Naive thymus-derived CD4-positive, alpha-beta T cell (primary cell): ENCODE measurements at regions of chr12 and their contacts with region 1.

Region 1: DNA sequence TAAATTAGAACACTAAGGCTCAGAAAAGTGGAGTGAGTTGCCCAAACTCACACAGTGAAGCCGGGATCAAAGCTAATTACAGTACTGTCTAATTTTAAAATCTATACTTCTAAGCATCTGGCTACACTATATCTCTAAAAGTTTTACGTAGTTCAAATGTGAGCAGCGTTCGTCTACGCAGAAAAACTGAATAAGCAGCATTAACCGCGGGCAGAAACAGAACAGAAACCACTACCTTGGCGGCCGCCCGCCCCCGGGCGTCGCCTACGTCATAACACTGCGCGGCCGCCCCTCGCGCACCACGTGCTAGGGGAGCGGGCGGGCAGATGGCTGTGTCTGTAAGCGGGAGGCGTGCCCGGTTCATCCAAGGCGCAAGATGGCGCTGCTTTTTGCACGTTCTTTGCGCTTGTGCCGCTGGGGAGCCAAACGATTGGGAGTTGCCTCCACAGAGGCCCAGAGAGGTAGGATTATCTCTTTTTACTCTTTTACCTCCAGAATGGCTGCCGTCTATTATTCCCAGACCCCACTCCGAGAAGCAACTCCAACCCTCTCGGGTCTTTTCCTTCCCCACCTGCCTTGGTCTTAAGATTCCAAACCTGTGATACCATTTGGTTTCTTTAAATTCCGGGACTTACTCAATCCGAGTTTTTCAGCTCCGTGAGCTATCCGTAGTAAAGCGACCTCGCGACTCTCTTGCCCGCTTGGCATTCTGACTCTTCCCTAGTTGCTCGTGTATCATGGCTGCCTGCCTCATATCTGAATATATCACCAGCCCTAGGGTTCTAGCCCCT is at the start of gene SPRYD4:
- DNase-seq: peak; percentile 89 to 97 (median 96)
- ATAC-seq: peak; percentile 99
- H3K4me3 ChIP-seq: peak within 1 kb of the TSS; percentile 99
- H3K4me3 Mint-ChIP-seq: peak within 1 kb of the TSS; percentile 90 to 99 (median 97)
- H3K27ac ChIP-seq: peak within 1 kb of the TSS; percentile 87
- H3K27ac Mint-ChIP-seq: peak within 1 kb of the TSS; percentile 92 to 99 (median 98)
- H3K4me1 ChIP-seq: peaks cover 12 to 20% of the 10 kb centered on the region in 2 donors
- H3K4me1 Mint-ChIP-seq: peaks cover 6 to 51% (median 26%) of the 10 kb centered on the region in 7 donors
- H3K27me3 ChIP-seq: no peaks in the 10 kb centered on the region
- H3K27me3 Mint-ChIP-seq: no peaks in the 10 kb centered on the region
- total RNA-seq, gene SPRYD4: 5.2 to 7.5 (median 7.2) TPM

Region 2: GRCh38 chr12:56206457-56207166 is 261.8 kb before region 1 on chr12:
- CTCF ChIA-PET with region 1: interaction called, 4 read pairs
- POLR2A ChIA-PET with region 1: no interaction called
- intact Hi-C with region 1: loop called (anchors 1 to 5 kb)
- DNase-seq: peak in 5 of 9 donors; percentile 13 to 37 (median 29)
- ATAC-seq: peak; percentile 70
- H3K4me3 ChIP-seq: no peak overlapping the region
- H3K4me3 Mint-ChIP-seq: no peak overlapping the region
- H3K27ac ChIP-seq: no peak overlapping the region
- H3K27ac Mint-ChIP-seq: peak overlapping the region in 6 of 9 donors; percentile 6 to 74 (median 33)
- H3K4me1 ChIP-seq: no peaks in the 10 kb centered on the region
- H3K4me1 Mint-ChIP-seq: peaks cover 0 to 9% (median 6%) of the 10 kb centered on the region in 7 donors
- H3K27me3 ChIP-seq: no peaks in the 10 kb centered on the region
- H3K27me3 Mint-ChIP-seq: no peaks in the 10 kb centered on the region

Region 3: GRCh38 chr12:56315622-56316473 is 152.6 kb before region 1 on chr12 and contains the start of gene CNPY2:
- CTCF ChIA-PET with region 1: interaction called, 10 read pairs
- POLR2A ChIA-PET with region 1: interaction called, 12 read pairs
- intact Hi-C with region 1: loop called (anchors 1 kb)
- DNase-seq: peak; percentile 83 to 94 (median 92)
- ATAC-seq: peak; percentile 93
- H3K4me3 ChIP-seq: peak within 1 kb of the TSS; percentile 100
- H3K4me3 Mint-ChIP-seq: peak within 1 kb of the TSS; percentile 96 to 99 (median 98)
- H3K27ac ChIP-seq: peak within 1 kb of the TSS; percentile 97
- H3K27ac Mint-ChIP-seq: peak within 1 kb of the TSS; percentile 93 to 99 (median 99)
- H3K4me1 ChIP-seq: peaks cover 13 to 16% of the 10 kb centered on the region in 2 donors
- H3K4me1 Mint-ChIP-seq: peaks cover 5 to 23% (median 13%) of the 10 kb centered on the region in 7 donors
- H3K27me3 ChIP-seq: no peaks in the 10 kb centered on the region
- H3K27me3 Mint-ChIP-seq: no peaks in the 10 kb centered on the region
- total RNA-seq, gene CNPY2: 48.4 to 134 (median 87.6) TPM

Region 4: GRCh38 chr12:56448860-56449621 is 19.4 kb before region 1 on chr12 and contains the start of gene TIMELESS:
- CTCF ChIA-PET with region 1: interaction called, 22 read pairs
- POLR2A ChIA-PET with region 1: interaction called, 18 read pairs
- intact Hi-C with region 1: loop called (anchors 1 kb)
- DNase-seq: peak; percentile 74 to 89 (median 85)
- ATAC-seq: peak; percentile 98
- H3K4me3 ChIP-seq: peak within 1 kb of the TSS; percentile 97
- H3K4me3 Mint-ChIP-seq: peak within 1 kb of the TSS; percentile 77 to 94 (median 92)
- H3K27ac ChIP-seq: peak within 1 kb of the TSS; percentile 74
- H3K27ac Mint-ChIP-seq: peak within 1 kb of the TSS; percentile 86 to 98 (median 93)
- H3K4me1 ChIP-seq: peaks cover 0 to 7% of the 10 kb centered on the region in 2 donors
- H3K4me1 Mint-ChIP-seq: peaks cover 12 to 36% (median 24%) of the 10 kb centered on the region in 7 donors
- H3K27me3 ChIP-seq: no peaks in the 10 kb centered on the region
- H3K27me3 Mint-ChIP-seq: no peaks in the 10 kb centered on the region
- total RNA-seq, gene TIMELESS: 4.4 to 42.3 (median 5.4) TPM

Region 5: DNA sequence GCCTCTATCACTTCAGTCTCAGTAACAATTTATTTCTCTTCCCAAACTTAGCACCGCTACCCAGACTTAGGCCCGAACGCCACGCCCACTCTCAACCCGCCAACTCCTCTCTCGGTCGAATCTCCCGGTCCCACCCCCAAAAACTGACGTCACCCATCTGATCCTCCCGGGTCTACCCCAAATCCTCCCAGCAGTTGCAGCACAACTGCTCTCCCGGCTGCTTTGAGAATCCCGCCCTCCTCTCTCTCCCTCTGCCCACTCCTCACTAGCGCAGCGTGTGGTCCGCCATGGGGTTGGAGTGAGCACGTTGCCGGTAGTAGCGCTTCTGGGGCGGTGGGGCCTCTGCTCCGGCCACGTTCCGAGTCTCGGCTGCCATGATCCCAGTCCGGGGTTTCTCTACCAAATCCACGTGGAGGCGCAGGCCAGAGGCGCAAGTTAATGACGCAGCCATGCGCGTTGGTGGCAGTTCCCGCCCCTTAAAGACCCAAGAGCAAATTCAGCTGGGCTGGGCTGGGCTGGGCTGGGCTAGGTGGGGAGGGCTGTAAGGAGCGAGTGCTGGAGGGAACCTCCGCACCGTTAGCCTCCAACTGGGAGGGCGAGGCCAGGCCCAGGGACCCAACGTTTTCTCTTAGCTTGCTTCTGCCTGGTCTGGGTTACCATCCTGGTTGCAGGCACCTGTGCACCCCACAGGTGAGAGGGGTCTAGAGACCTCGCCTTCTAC is 1303.5 kb after region 1 on chr12 and contains the start of gene METTL1:
- CTCF ChIA-PET with region 1: no interaction called
- POLR2A ChIA-PET with region 1: no interaction called
- intact Hi-C with region 1: loop called in 1 of 2 experiments (anchors 1 kb)
- DNase-seq: peak; percentile 70 to 91 (median 86)
- ATAC-seq: peak; percentile 92
- H3K4me3 ChIP-seq: peak within 1 kb of the TSS; percentile 99
- H3K4me3 Mint-ChIP-seq: peak within 1 kb of the TSS; percentile 88 to 97 (median 94)
- H3K27ac ChIP-seq: peak within 1 kb of the TSS; percentile 90
- H3K27ac Mint-ChIP-seq: peak within 1 kb of the TSS; percentile 74 to 98 (median 97)
- H3K4me1 ChIP-seq: peaks cover 6 to 13% of the 10 kb centered on the region in 2 donors
- H3K4me1 Mint-ChIP-seq: peaks cover 21 to 35% (median 25%) of the 10 kb centered on the region in 7 donors
- H3K27me3 ChIP-seq: no peaks in the 10 kb centered on the region
- H3K27me3 Mint-ChIP-seq: peaks cover 0 to 3% (median 2%) of the 10 kb centered on the region in 5 donors
- total RNA-seq, gene METTL1: 11.8 to 30.9 (median 16.0) TPM